ENCODE measurements at regions of chr17 and their contacts with region 1.

Region 1: GRCh38 chr17:34199932-34200534 is 55.1 kb upstream of the CCL2 start:
- DNase-seq: peak; percentile 87
- ATAC-seq: peak; percentile 97
- H3K4me3 ChIP-seq: no peak overlapping the region
- H3K27ac ChIP-seq: no peak overlapping the region
- H3K4me1 ChIP-seq: no peaks in the 10 kb centered on the region
- H3K27me3 ChIP-seq: no peaks in the 10 kb centered on the region
- CTCF ChIP-seq: peak; percentile 100; the same call in 1 of the 2 replicates
- POLR2A ChIP-seq: peak; percentile 64
- RAD21 ChIP-seq: peak; percentile 100

Region 2: DNA sequence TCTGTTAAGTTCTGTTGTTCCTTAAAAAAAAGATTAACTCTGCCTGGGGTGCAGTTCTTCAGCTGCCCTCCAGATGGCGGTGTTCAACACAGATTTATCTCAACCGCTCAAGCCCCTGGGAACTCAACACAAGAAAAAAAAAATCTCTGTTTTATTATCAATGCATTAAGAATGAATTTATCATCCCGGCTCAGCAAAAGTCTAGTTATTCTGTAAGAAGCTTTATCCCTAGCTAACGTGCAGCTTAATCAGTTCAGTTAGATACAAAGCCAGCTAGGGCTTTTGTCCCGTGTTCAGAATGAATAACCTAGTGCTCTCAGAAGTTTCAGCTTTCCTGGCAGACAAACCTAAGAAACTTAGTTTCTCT is 420.8 kb before region 1 on chr17:
- CTCF ChIA-PET with region 1: interaction called, 4 read pairs
- POLR2A ChIA-PET with region 1: no interaction called
- dilution Hi-C with region 1: no loop called
- in situ Hi-C with region 1: no loop called
- intact Hi-C with region 1: loop called (anchors 1 kb)
- DNase-seq: peak; percentile 69
- ATAC-seq: peak; percentile 97
- H3K4me3 ChIP-seq: no peak overlapping the region
- H3K27ac ChIP-seq: no peak overlapping the region
- H3K4me1 ChIP-seq: no peaks in the 10 kb centered on the region
- H3K27me3 ChIP-seq: peaks cover 2% of the 10 kb centered on the region; the same call in 1 of the 2 replicates
- CTCF ChIP-seq: peak; percentile 89
- POLR2A ChIP-seq: no peak
- RAD21 ChIP-seq: peak; percentile 54

Region 3: GRCh38 chr17:34110315-34110714 is 89.7 kb before region 1 on chr17:
- CTCF ChIA-PET with region 1: no interaction called
- POLR2A ChIA-PET with region 1: no interaction called
- dilution Hi-C with region 1: no loop called
- in situ Hi-C with region 1: no loop called
- intact Hi-C with region 1: no loop called
- DNase-seq: no peak
- ATAC-seq: no peak
- H3K4me3 ChIP-seq: no peak overlapping the region
- H3K27ac ChIP-seq: no peak overlapping the region
- H3K4me1 ChIP-seq: no peaks in the 10 kb centered on the region
- H3K27me3 ChIP-seq: no peaks in the 10 kb centered on the region
- CTCF ChIP-seq: no peak
- POLR2A ChIP-seq: no peak
- RAD21 ChIP-seq: no peak

Region 4: GRCh38 chr17:34226011-34226743 is 26.1 kb after region 1 on chr17:
- CTCF ChIA-PET with region 1: no interaction called
- POLR2A ChIA-PET with region 1: no interaction called
- dilution Hi-C with region 1: no loop called
- in situ Hi-C with region 1: no loop called
- intact Hi-C with region 1: no loop called
- DNase-seq: peak; percentile 31
- ATAC-seq: no peak
- H3K4me3 ChIP-seq: no peak overlapping the region
- H3K27ac ChIP-seq: no peak overlapping the region
- H3K4me1 ChIP-seq: no peaks in the 10 kb centered on the region
- H3K27me3 ChIP-seq: peaks cover 1% of the 10 kb centered on the region
- CTCF ChIP-seq: no peak
- POLR2A ChIP-seq: no peak
- RAD21 ChIP-seq: no peak

Region 5: DNA sequence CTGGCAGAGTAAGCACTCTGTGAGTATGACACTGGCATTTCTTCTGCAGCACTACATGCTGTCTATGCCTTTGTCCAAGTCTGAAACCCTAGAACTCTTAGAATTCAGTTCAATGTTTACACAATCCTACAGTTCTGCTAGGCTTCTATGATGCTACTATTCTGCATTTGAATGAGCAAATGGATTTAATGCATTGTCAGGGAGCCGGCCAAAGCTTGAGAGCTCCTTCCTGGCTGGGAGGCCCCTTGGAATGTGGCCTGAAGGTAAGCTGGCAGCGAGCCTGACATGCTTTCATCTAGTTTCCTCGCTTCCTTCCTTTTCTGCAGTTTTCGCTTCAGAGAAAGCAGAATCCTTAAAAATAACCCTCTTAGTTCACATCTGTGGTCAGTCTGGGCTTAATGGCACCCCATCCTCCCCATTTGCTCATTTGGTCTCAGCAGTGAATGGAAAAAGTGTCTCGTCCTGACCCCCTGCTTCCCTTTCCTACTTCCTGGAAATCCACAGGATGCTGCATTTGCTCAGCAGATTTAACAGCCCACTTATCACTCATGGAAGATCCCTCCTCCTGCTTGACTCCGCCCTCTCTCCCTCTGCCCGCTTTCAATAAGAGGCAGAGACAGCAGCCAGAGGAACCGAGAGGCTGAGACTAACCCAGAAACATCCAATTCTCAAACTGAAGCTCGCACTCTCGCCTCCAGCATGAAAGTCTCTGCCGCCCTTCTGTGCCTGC is 54.8 kb after region 1 on chr17 and contains the start of gene CCL2:
- CTCF ChIA-PET with region 1: interaction called, 5 read pairs
- POLR2A ChIA-PET with region 1: interaction called, 4 read pairs
- dilution Hi-C with region 1: no loop called
- in situ Hi-C with region 1: no loop called
- intact Hi-C with region 1: loop called (anchors 1 kb)
- DNase-seq: peak; percentile 85
- ATAC-seq: peak; percentile 69
- H3K4me3 ChIP-seq: peak within 1 kb of the TSS; percentile 47
- H3K27ac ChIP-seq: peak within 1 kb of the TSS; percentile 89
- H3K4me1 ChIP-seq: peaks cover 38% of the 10 kb centered on the region
- H3K27me3 ChIP-seq: no peaks in the 10 kb centered on the region
- CTCF ChIP-seq: no peak
- POLR2A ChIP-seq: peak; percentile 37; the same call in 1 of the 2 replicates
- RAD21 ChIP-seq: no peak
- total RNA-seq, gene CCL2: 126 and 206 TPM in 2 replicates

Region 6: GRCh38 chr17:34306466-34306865 is 106.4 kb after region 1 on chr17:
- CTCF ChIA-PET with region 1: interaction called, 40 read pairs
- POLR2A ChIA-PET with region 1: interaction called, 3 read pairs
- dilution Hi-C with region 1: no loop called
- in situ Hi-C with region 1: loop called (anchors 5 kb)
- intact Hi-C with region 1: loop called (anchors 1 kb)
- DNase-seq: peak; percentile 87
- ATAC-seq: peak; percentile 87
- H3K4me3 ChIP-seq: no peak overlapping the region
- H3K27ac ChIP-seq: no peak overlapping the region
- H3K4me1 ChIP-seq: peaks cover 8% of the 10 kb centered on the region
- H3K27me3 ChIP-seq: no peaks in the 10 kb centered on the region
- CTCF ChIP-seq: peak; percentile 81
- POLR2A ChIP-seq: no peak
- RAD21 ChIP-seq: peak; percentile 91

Region 7: DNA sequence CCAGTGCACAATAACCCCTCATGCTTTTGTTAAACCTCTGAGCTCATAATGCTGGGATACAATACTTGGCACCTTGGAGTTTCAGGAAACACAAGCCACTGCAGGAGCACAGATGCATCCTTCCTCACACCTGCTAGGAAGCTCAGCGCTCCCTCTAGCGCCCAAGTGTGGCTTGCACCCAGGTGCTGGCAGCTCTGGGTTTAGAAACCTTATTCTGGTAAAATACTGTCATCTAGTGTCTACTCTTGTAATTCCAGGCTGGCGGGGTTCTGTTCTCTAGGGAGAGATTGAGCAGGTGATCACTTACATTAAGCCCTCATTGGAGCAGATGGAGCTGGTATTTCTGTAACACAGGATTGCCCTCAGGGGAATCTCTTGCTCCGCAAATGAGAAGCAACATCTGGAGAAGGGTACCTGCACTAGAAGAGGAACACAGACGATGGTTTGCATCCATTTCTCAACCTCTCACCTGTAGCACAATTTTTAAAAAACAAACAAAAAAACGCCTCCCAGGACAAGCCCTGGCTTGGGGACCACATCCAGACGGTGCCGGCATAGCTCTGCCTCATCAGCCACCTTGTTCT is 161.5 kb after region 1 on chr17:
- CTCF ChIA-PET with region 1: interaction called, 82 read pairs
- POLR2A ChIA-PET with region 1: no interaction called
- dilution Hi-C with region 1: no loop called
- in situ Hi-C with region 1: loop called (anchors 5 kb)
- intact Hi-C with region 1: loop called (anchors 1 kb)
- DNase-seq: peak; percentile 86
- ATAC-seq: peak; percentile 93
- H3K4me3 ChIP-seq: no peak overlapping the region
- H3K27ac ChIP-seq: no peak overlapping the region
- H3K4me1 ChIP-seq: no peaks in the 10 kb centered on the region
- H3K27me3 ChIP-seq: peaks cover 6% of the 10 kb centered on the region; the same call in 1 of the 2 replicates
- CTCF ChIP-seq: peak; percentile 100
- POLR2A ChIP-seq: peak; percentile 60; the same call in 1 of the 2 replicates
- RAD21 ChIP-seq: peak; percentile 100

Region 8: DNA sequence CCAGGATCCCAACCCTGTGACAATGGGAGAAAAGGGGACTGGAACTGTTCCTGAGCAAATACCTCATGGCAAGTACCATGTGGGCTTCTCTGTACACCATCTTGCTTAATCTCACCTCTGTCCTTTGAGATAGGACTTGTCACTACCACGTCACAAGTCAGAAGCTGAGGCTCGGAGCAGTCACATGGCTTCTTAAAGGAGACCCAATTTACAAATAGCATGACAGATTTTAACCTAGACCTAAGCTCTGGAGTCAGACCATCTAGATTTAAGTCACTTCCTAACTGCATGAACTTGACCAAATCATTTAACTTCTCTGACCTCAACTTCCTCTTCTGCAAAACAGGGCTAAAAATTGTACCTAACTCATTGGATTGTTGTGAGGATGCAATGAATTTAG is 199.0 kb after region 1 on chr17:
- CTCF ChIA-PET with region 1: no interaction called
- POLR2A ChIA-PET with region 1: no interaction called
- dilution Hi-C with region 1: no loop called
- in situ Hi-C with region 1: no loop called
- intact Hi-C with region 1: no loop called
- DNase-seq: no peak
- ATAC-seq: no peak
- H3K4me3 ChIP-seq: no peak overlapping the region
- H3K27ac ChIP-seq: no peak overlapping the region
- H3K4me1 ChIP-seq: no peaks in the 10 kb centered on the region
- H3K27me3 ChIP-seq: 0 out of 2 replicates have a peak, but pooled peaks cover 2% of the 10 kb centered on the region
- CTCF ChIP-seq: no peak
- POLR2A ChIP-seq: no peak
- RAD21 ChIP-seq: no peak